Natural killer cell (primary cell): ENCODE measurements at regions of chr17 and their contacts with region 1.

Region 1: DNA sequence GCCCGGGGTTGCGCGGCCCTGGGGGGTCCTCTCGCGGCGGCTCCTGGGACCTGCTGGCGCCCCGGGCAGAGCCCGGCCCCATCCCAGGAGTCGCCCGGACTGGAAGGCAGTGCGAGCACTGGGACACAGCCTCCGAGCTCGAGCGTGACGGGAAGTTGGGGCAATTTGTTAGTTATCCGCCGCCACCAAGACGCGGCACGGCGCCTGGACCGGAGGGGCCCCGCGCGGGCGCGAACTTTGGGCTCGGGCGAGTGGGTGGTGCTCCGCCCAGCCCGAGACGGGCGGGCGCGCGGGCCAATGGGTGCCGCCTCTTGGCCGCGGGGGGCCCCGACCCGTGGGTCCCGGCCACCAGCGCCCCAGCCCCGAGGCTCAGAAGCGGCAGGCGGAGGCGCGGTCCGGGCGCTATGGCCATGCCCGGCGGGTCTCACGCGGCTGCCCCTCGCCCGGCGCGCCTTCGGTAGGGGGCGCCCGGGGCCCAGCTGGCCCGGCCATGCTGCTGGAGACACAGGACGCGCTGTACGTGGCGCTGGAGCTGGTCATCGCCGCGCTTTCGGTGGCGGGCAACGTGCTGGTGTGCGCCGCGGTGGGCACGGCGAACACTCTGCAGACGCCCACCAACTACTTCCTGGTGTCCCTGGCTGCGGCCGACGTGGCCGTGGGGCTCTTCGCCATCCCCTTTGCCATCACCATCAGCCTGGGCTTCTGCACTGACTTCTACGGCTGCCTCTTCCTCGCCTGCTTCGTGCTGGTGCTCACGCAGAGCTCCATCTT is at the start of gene ADORA2B:
- DNase-seq: peak; percentile 28 to 46
- ATAC-seq: peak; percentile 68 to 74 (median 74)
- H3K4me3 ChIP-seq: peak within 1 kb of the TSS; percentile 29
- H3K4me3 Mint-ChIP-seq: peak within 1 kb of the TSS; percentile 84
- H3K27ac ChIP-seq: no peak within 1 kb of the TSS
- H3K27ac Mint-ChIP-seq: no peak within 1 kb of the TSS
- H3K4me1 ChIP-seq: peaks cover 17% of the 10 kb centered on the region
- H3K4me1 Mint-ChIP-seq: peaks cover 8 to 9% of the 10 kb centered on the region in 2 donors
- H3K27me3 ChIP-seq: peaks cover 17% of the 10 kb centered on the region
- H3K27me3 Mint-ChIP-seq: peaks cover 23 to 30% of the 10 kb centered on the region in 2 donors
- CTCF ChIP-seq: peak; percentile 21
- total RNA-seq, gene ADORA2B: 0.14 to 0.88 (median 0.41) TPM

Region 2: GRCh38 chr17:15926039-15926740 is 18.8 kb before region 1 on chr17:
- intact Hi-C with region 1: no loop called
- DNase-seq: no peak
- ATAC-seq: no peak
- H3K4me3 ChIP-seq: no peak overlapping the region
- H3K4me3 Mint-ChIP-seq: no peak overlapping the region
- H3K27ac ChIP-seq: no peak overlapping the region
- H3K27ac Mint-ChIP-seq: no peak overlapping the region
- H3K4me1 ChIP-seq: peaks cover 11% of the 10 kb centered on the region
- H3K4me1 Mint-ChIP-seq: peaks cover 10 to 17% of the 10 kb centered on the region in 2 donors
- H3K27me3 ChIP-seq: no peaks in the 10 kb centered on the region
- H3K27me3 Mint-ChIP-seq: peaks cover 10 to 17% of the 10 kb centered on the region in 2 donors
- CTCF ChIP-seq: no peak

Region 3: GRCh38 chr17:15981208-15981607 is 36.3 kb after region 1 on chr17:
- intact Hi-C with region 1: no loop called
- DNase-seq: no peak
- ATAC-seq: no peak
- H3K4me3 ChIP-seq: no peak overlapping the region
- H3K4me3 Mint-ChIP-seq: no peak overlapping the region
- H3K27ac ChIP-seq: no peak overlapping the region
- H3K27ac Mint-ChIP-seq: no peak overlapping the region
- H3K4me1 ChIP-seq: no peaks in the 10 kb centered on the region
- H3K4me1 Mint-ChIP-seq: peaks cover 0 to 4% of the 10 kb centered on the region in 2 donors
- H3K27me3 ChIP-seq: no peaks in the 10 kb centered on the region
- H3K27me3 Mint-ChIP-seq: no peaks in the 10 kb centered on the region
- CTCF ChIP-seq: no peak

Region 4: DNA sequence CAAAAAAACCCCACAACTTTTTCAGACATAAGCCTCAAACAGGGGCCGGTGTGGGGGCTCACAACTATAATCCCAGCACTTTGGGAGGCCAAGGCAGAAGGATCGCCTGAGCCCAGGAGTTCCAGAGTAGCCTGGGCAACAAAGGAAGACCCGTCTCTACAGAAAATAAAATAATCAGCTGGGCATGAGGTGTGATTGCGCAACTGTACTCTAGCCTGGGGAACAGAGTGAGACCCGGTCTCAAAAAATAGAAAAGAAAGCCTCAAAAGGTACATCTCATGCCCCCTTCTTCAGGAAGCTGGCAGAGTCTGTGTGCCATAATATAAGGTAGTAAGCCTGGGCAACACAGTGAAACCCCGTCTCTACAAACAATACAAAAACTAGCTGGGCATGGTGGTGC is 51.4 kb after region 1 on chr17:
- intact Hi-C with region 1: loop called (anchors 2 kb)
- DNase-seq: no peak
- ATAC-seq: no peak
- H3K4me3 ChIP-seq: no peak overlapping the region
- H3K4me3 Mint-ChIP-seq: no peak overlapping the region
- H3K27ac ChIP-seq: no peak overlapping the region
- H3K27ac Mint-ChIP-seq: no peak overlapping the region
- H3K4me1 ChIP-seq: peaks cover 17% of the 10 kb centered on the region
- H3K4me1 Mint-ChIP-seq: peaks cover 11 to 25% of the 10 kb centered on the region in 2 donors
- H3K27me3 ChIP-seq: no peaks in the 10 kb centered on the region
- H3K27me3 Mint-ChIP-seq: no peaks in the 10 kb centered on the region
- CTCF ChIP-seq: no peak

Region 5: DNA sequence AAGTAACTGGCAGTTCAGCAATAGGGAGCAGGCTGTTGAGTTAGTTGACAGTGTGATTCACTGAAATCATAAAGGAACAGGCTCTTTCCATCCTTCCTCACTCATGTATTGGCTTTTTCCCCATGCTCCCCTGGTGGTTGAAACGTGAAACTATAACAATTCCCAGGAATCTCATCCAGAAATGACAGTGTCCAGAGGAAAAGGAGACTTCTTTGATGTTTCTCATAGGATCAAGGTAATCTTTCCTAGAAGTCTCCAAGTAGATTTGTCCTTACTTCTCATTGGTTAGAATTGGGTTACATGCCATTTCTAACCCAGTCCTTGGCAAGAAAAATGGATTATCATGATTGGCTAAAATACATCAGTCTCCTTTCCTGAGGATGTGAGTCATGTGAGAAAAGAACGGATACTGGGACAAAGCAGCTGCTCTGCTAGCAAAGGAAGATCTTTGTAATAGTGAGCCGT is 69.0 kb after region 1 on chr17:
- intact Hi-C with region 1: no loop called
- DNase-seq: no peak
- ATAC-seq: no peak
- H3K4me3 ChIP-seq: no peak overlapping the region
- H3K4me3 Mint-ChIP-seq: no peak overlapping the region
- H3K27ac ChIP-seq: no peak overlapping the region
- H3K27ac Mint-ChIP-seq: peak overlapping the region in 1 of 2 donors; percentile 23
- H3K4me1 ChIP-seq: no peaks in the 10 kb centered on the region
- H3K4me1 Mint-ChIP-seq: peaks cover 0 to under 1% of the 10 kb centered on the region in 2 donors
- H3K27me3 ChIP-seq: no peaks in the 10 kb centered on the region
- H3K27me3 Mint-ChIP-seq: no peaks in the 10 kb centered on the region
- CTCF ChIP-seq: no peak

Region 6: DNA sequence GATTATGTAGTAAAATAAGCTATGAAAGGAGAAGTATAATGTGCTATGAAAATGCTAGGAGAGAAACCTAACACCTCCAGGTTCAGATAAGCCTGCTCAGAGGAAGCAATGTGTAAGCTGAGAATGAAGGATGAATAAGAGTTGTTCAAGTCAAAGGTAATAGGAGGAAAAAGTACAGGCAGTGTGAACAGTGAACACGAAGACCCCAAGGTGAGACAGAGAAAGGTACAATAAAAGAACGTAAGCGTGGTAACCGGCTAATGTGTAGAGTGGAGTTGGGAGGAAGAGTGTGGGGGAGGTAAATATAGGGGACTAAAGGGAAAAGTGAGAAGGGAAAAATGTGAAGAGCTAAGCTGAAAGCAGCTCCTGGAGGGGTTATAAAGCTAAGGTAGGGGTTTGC is 128.9 kb after region 1 on chr17:
- intact Hi-C with region 1: no loop called
- DNase-seq: no peak
- ATAC-seq: no peak
- H3K4me3 ChIP-seq: no peak overlapping the region
- H3K4me3 Mint-ChIP-seq: no peak overlapping the region
- H3K27ac ChIP-seq: no peak overlapping the region
- H3K27ac Mint-ChIP-seq: peak overlapping the region in 1 of 2 donors; percentile 54
- H3K4me1 ChIP-seq: no peaks in the 10 kb centered on the region
- H3K4me1 Mint-ChIP-seq: peaks cover 0 to 15% of the 10 kb centered on the region in 2 donors
- H3K27me3 ChIP-seq: no peaks in the 10 kb centered on the region
- H3K27me3 Mint-ChIP-seq: no peaks in the 10 kb centered on the region
- CTCF ChIP-seq: no peak